MCF 10A (cell line): ENCODE measurements at regions of chrX and their contacts with region 1.

Region 1: DNA sequence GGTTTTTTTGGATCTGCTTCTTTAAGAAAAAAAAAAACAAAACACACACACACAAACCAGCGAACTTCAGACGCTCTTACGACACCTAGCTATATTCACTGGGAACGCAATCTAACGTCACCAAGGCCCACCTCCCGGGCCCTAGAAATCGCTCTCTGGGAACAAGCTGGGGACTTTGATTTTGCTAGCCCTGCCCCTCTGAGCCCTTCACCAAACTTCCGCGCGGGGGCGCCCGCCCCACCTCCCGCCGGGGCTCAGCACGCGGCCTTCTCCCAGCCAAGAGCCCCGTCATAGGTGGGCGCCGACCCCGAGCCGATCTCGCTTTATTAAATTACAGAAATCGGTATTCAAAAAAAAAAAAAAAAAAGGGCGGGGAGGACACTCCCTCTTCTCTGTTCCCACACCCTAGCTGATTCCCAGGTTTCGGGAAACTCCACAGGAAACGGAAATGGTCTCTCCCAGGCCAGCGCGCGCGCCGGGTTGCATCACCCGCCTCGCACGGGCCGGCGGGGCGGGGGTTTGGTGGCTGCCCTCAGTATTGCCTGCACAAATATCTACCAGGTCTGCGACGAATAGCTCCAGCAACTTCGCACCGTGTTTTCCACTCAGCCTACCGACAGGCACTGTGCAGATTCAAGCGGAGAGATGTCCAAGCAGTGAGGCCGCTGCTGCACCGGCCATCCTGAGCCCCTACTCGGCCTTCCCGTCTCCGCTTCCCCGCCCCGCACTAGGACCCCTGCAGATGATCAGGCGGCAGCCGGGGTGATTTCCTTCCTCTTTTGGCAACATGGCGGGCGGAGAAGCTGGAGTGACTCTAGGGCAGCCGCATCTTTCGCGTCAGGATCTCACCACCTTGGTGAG is at the start of gene EIF2S3:
- DNase-seq: peak; percentile 98
- H3K4me3 Mint-ChIP-seq: no peak within 1 kb of the TSS
- H3K27ac Mint-ChIP-seq: peak within 1 kb of the TSS; percentile 99
- H3K4me1 Mint-ChIP-seq: no peaks in the 10 kb centered on the region
- H3K27me3 Mint-ChIP-seq: peaks cover 10% of the 10 kb centered on the region
- CTCF ChIP-seq: peak; percentile 50
- total RNA-seq, gene EIF2S3: 354 and 391 TPM in 2 replicates

Region 2: DNA sequence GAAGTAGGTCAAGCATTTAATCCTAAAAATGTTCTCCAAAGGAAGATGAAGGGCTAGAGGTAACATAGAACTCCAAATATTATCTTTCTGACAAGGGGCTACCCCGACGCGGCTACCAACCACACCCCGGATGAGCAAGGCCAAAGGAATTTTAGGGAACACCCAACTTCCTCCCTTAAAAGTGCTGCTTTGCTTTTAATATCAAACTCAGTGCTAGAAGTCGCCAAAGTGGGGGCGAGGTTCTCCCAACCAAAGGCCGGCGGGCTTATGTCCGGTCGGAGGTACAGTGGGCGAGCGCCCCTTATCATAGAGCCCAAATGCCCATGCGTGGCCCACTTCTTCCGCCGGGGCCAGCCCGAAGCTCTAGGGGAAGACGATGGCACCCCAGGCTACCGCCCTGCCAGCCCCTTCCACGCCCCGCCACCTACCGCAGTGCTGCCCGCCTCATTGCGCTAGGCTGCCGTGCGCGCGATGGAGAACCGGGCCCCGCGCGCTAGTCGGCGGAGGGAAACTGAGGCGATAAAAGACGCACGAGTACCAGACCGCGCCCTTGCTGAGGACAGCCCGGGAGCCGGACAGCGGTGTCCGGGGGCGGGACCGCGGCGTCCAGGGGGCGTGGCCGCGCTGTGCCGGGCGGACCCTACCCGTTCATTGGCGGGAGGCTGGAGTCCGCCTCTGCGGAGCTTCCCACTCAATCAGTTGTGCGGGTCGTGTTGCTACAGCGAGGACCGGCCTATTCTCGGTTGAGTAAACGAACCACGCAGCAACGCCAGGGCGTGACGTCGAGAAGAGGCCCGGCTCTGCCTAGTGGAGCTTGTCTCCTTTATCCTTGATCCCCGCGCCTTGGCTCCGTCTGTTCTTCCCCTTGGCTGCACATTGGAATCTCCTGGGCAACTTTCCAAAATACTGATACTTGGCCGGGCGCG is 311.5 kb before region 1 on chrX and contains the start of gene ACOT9:
- CTCF ChIA-PET with region 1: no interaction called
- POLR2A ChIA-PET with region 1: interaction called, 10 read pairs
- intact Hi-C with region 1: no loop called
- DNase-seq: peak; percentile 94
- H3K4me3 Mint-ChIP-seq: peak within 1 kb of the TSS; percentile 73
- H3K27ac Mint-ChIP-seq: peak within 1 kb of the TSS; percentile 77
- H3K4me1 Mint-ChIP-seq: peaks cover 13% of the 10 kb centered on the region
- H3K27me3 Mint-ChIP-seq: no peaks in the 10 kb centered on the region
- CTCF ChIP-seq: no peak
- total RNA-seq, gene ACOT9: 71.9 and 83.9 TPM in 2 replicates

Region 3: DNA sequence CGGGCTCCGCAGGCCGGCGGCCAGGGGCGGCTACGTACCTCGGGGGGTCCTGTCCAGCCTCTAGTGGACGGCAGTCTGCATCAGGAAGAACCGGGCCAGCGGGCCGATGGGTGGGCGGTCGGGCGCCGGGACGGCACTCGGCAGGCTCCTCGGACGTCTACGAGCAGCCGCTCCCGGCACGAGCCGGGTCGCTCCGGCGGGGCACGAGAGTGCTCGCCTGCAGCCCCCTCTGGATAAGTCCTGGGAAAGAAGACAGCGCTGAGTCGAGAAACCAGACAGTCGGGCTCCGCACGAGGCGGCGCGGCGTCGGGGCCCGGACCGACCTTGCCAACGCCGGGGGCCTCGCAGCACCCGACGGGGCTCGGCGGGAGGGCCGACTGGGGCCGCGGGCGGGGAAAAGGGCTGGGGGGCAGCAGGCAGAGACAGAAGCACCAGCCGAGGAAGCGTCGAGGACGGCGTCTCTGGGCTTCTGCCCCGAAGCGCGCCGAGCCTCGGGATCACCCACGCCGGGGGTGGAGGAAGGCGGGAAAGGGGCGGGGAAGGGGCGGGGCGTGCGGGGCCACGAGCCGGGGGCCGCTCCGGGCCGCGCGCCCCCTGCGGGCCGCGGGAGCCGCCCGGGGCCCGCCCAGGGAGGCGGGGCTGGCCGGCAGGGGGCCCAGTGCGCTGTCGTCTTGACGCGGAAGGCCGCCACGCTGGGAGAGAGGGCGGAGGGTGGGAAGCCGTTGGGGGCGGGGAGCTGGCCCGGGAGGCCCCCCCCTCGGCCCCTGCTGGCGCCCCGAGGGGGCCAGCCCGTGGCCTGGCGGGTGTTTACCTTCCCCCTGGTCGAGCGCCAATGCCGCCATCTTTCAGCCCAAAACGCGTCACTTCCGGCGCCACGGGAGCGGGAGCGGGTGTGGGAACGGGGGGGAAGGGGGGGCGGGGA is 29.3 kb before region 1 on chrX:
- CTCF ChIA-PET with region 1: interaction called, 23 read pairs
- POLR2A ChIA-PET with region 1: interaction called, 114 read pairs
- intact Hi-C with region 1: loop called (anchors 1 kb)
- DNase-seq: peak; percentile 83
- H3K4me3 Mint-ChIP-seq: peak overlapping the region; percentile 73
- H3K27ac Mint-ChIP-seq: peak overlapping the region; percentile 77
- H3K4me1 Mint-ChIP-seq: peaks cover 4% of the 10 kb centered on the region
- H3K27me3 Mint-ChIP-seq: peaks cover 41% of the 10 kb centered on the region
- CTCF ChIP-seq: no peak

Region 4: GRCh38 chrX:24870143-24870542 is 815.7 kb after region 1 on chrX:
- CTCF ChIA-PET with region 1: no interaction called
- POLR2A ChIA-PET with region 1: no interaction called
- intact Hi-C with region 1: no loop called
- DNase-seq: no peak
- H3K4me3 Mint-ChIP-seq: no peak overlapping the region
- H3K27ac Mint-ChIP-seq: no peak overlapping the region
- H3K4me1 Mint-ChIP-seq: no peaks in the 10 kb centered on the region
- H3K27me3 Mint-ChIP-seq: peaks cover 31% of the 10 kb centered on the region
- CTCF ChIP-seq: no peak